Posterior cingulate gyrus (tissue), 11 donors: ENCODE measurements at regions of chr2 and their contacts with region 1.

Region 1: GRCh38 chr2:37164757-37165156 is 8.0 kb upstream of the EIF2AK2 start:
- DNase-seq: no peak

Region 2: GRCh38 chr2:36355151-36355889 is 809.4 kb before region 1 on chr2 and contains the start of gene CRIM1:
- intact Hi-C with region 1: no loop called
- DNase-seq: peak; percentile 65 to 96 (median 80)

Region 3: GRCh38 chr2:37324786-37325624 is 160.2 kb after region 1 on chr2 and contains the start of gene PRKD3:
- intact Hi-C with region 1: loop called (anchors 5 kb)
- DNase-seq: peak in 4 of 10 donors; percentile 36 to 93 (median 78)